ENCODE measurements at regions of chr1 and their contacts with region 1.

Region 1: DNA sequence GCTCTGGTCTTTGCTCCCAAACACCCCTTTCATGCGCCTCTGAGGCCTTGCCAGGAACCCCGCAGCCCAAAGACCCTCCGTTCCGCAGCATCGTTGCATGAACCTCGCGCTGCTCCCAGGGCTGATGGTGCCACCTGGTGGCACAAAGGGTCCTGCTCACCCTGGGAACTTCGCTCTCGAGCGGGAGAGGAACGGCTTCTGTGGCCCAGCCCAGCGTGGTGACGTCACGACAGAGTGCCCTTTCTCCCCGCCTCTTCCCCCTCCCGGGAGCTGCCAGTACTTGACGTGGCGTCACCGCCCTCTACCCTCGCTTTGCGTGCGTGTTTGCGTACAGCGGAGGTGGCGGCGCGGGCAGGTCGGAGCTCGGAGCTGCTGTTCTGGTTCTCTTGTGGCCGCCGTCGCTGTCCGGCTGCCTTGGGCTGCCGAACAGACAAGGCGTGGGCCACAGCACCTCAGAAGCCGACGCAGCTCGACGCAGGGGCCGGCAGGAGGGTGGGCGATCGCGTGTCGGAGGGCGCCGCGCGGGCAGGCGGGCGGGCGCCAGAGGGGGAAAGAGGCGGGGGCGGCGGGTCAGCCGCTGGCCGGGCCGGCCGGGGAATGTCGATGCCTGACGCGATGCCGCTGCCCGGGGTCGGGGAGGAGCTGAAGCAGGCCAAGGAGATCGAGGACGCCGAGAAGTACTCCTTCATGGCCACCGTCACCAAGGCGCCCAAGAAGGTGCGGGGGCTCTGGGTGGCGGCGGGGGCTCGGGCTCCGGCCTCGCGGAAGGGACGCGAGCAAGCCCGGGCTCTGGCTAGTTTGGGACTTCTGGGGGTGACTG is at the start of gene AHCYL1:
- DNase-seq: peak; percentile 99 to 100 (median 100)

Region 2: GRCh38 chr1:109548321-109549267 is 436.1 kb before region 1 on chr1 and contains the start of gene GNAI3:
- intact Hi-C with region 1: loop called (anchors 10 kb)
- DNase-seq: peak; percentile 95 to 99 (median 98)

Region 3: DNA sequence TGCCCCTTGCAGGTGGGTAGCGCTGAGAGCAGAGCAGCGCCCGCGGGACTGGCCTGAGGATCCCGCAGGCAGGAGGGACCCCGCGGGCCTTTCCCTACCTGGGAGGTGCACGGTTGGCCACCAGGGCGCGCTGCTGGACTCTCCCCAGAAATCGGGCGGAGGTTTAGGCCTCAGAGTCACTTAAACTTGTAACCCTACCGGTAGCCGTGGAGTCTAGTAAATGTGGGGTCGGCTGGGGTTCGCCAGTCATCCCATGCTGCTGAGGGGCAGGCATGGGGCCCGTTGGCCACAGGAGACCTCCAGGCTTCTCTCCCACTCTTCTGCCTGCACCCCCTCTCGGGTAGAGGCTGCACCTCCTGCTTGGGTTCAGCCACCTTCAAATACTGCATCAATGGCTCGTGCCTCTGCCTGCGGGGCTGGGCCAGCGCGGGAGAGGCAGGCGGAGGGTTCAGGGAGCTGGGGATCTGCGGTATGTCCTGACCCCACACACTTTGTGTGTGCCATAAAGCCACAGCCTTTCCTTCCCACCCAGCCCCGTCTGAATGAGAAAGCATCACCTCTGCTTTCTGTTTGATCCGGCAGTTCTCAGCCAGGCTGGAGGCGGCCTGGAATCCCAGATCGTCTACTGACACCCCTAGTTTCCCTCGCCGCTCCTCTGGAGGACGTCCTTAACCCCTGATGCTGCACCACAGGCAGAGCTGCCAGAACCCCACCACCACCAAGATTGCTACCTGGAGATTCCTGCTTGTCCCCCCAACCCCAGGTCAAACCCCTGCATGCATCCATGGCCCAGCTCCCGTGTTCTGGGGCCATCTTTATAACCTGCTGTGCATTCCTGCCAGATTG is 341.1 kb before region 1 on chr1:
- intact Hi-C with region 1: loop called (anchors 10 kb)
- DNase-seq: peak in 39 of 42 donors; percentile 33 to 87 (median 76)

Region 4: GRCh38 chr1:109773146-109773899 is 211.3 kb before region 1 on chr1:
- intact Hi-C with region 1: loop called (anchors 1 kb)
- DNase-seq: peak; percentile 65 to 94 (median 86)

Region 5: GRCh38 chr1:109910123-109910962 is 74.3 kb before region 1 on chr1 and contains the start of gene CSF1:
- intact Hi-C with region 1: loop called (anchors 10 kb)
- DNase-seq: peak; percentile 40 to 92 (median 78)

Measured in head of caudate nucleus (tissue), 42 donors.